PC-9 (cell line): ENCODE measurements at regions of chr1 and their contacts with region 1.

Region 1: DNA sequence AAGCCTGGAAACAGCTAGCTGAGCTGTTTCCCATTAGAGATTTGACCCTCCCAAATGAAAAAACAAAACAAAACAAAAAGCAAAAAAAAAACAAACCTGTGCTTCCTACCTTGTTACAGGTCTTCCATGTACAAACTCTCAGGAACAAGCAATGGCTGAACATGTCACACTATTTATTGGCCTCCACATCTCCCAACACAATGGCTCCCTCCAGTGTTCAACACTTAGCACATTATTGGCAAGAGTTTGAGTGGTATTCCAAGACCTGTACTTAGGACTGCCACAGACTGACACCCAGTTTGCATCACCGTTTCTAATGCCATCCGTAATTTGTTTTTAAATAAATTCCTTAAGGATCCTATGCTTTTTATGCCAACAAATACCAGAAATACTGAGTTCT is 195.0 kb upstream of the OLFM3 start:
- DNase-seq: peak in 1 of 2 experiments; percentile 47
- H3K4me3 ChIP-seq: no peak overlapping the region
- H3K27ac ChIP-seq: no peak overlapping the region
- H3K4me1 ChIP-seq: no peaks in the 10 kb centered on the region
- H3K27me3 ChIP-seq: no peaks in the 10 kb centered on the region
- CTCF ChIP-seq: peak; percentile 59; the same call in 1 of the 2 replicates

Region 2: GRCh38 chr1:101520302-101520701 is 671.4 kb before region 1 on chr1:
- CTCF ChIA-PET with region 1: no interaction called
- POLR2A ChIA-PET with region 1: no interaction called
- intact Hi-C with region 1: loop called (anchors 5 kb)
- DNase-seq: peak; percentile 2 to 43
- H3K4me3 ChIP-seq: no peak overlapping the region
- H3K27ac ChIP-seq: no peak overlapping the region
- H3K4me1 ChIP-seq: no peaks in the 10 kb centered on the region
- H3K27me3 ChIP-seq: no peaks in the 10 kb centered on the region
- CTCF ChIP-seq: peak; percentile 94

Region 3: GRCh38 chr1:101587741-101588140 is 604.0 kb before region 1 on chr1:
- CTCF ChIA-PET with region 1: no interaction called
- POLR2A ChIA-PET with region 1: no interaction called
- intact Hi-C with region 1: no loop called
- DNase-seq: no peak
- H3K4me3 ChIP-seq: no peak overlapping the region
- H3K27ac ChIP-seq: no peak overlapping the region
- H3K4me1 ChIP-seq: no peaks in the 10 kb centered on the region
- H3K27me3 ChIP-seq: no peaks in the 10 kb centered on the region
- CTCF ChIP-seq: no peak

Region 4: GRCh38 chr1:101993710-101994109 is 198.0 kb before region 1 on chr1:
- CTCF ChIA-PET with region 1: no interaction called
- POLR2A ChIA-PET with region 1: no interaction called
- intact Hi-C with region 1: loop called (anchors 5 kb)
- DNase-seq: no peak
- H3K4me3 ChIP-seq: no peak overlapping the region
- H3K27ac ChIP-seq: no peak overlapping the region
- H3K4me1 ChIP-seq: no peaks in the 10 kb centered on the region
- H3K27me3 ChIP-seq: no peaks in the 10 kb centered on the region
- CTCF ChIP-seq: peak; percentile 40